ENCODE measurements at regions of chr1 and their contacts with region 1.

Region 1: GRCh38 chr1:67535474-67535873 is 105.3 kb upstream of the SERBP1 start:
- DNase-seq: peak; percentile 69
- ATAC-seq: peak; percentile 87
- H3K4me3 ChIP-seq: no peak overlapping the region
- H3K27ac ChIP-seq: no peak overlapping the region
- H3K4me1 ChIP-seq: no peaks in the 10 kb centered on the region
- H3K27me3 ChIP-seq: no peaks in the 10 kb centered on the region
- CTCF ChIP-seq: peak; percentile 88 to 99 (median 97)
- POLR2A ChIP-seq: no peak
- RAD21 ChIP-seq: peak; percentile 95

Region 2: GRCh38 chr1:67524143-67525052 is 11.1 kb before region 1 on chr1:
- CTCF ChIA-PET with region 1: interaction called, 22 read pairs
- POLR2A ChIA-PET with region 1: interaction called, 4 read pairs
- RAD21 ChIA-PET with region 1: no interaction called
- intact Hi-C with region 1: no loop called
- DNase-seq: peak; percentile 10
- ATAC-seq: peak; percentile 83
- H3K4me3 ChIP-seq: no peak overlapping the region
- H3K27ac ChIP-seq: no peak overlapping the region
- H3K4me1 ChIP-seq: peaks cover 0 to 7% of the 10 kb centered on the region in 2 experiments; a peak in 1 of 4 replicates
- H3K27me3 ChIP-seq: no peaks in the 10 kb centered on the region
- CTCF ChIP-seq: peak; percentile 36 to 57 (median 53); a peak in 5 of 6 replicates
- POLR2A ChIP-seq: no peak
- RAD21 ChIP-seq: peak; percentile 50

Region 3: DNA sequence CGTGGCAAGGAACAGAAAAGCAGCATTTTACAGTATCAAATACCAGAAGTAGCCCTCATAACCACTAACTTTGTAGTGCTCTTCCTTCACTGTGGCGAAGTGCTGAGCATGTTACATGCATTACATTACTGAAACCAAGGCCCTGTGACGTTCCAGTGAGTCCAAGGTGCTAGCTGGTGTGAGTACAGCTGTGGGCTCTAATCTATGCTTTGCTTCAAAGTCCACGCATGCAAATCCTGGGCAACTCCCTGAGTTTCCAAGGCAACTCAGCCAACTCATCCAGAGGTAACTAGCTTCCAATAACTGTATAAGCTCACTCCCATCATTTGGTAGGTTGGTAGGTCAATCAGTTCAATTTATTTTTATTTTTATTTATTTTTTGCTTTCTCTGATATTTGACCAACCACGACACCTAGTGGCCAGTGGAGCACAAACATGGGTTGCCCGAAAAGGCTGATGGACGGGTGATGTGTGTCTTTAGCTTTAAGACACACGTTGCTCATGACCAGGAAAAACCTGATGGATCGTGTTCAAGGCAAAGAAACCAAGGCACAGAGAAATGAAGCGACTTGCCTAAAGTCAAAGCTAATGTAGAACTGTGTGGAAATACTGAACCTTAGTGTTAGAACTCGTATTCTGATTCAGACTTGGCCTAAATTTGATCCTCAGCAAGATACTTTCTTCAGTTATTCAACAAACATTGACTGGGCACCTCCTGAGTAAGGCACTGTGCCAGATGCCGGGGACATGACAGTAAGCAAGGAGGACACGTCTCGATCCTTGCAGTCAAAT is 224.8 kb after region 1 on chr1:
- CTCF ChIA-PET with region 1: interaction called, 149 read pairs
- POLR2A ChIA-PET with region 1: interaction called, 9 read pairs
- RAD21 ChIA-PET with region 1: interaction called, 8 to 17 read pairs
- intact Hi-C with region 1: loop called (anchors 1 kb)
- DNase-seq: peak; percentile 54
- ATAC-seq: peak; percentile 91
- H3K4me3 ChIP-seq: no peak overlapping the region
- H3K27ac ChIP-seq: no peak overlapping the region
- H3K4me1 ChIP-seq: peaks cover 8 to 17% of the 10 kb centered on the region in 2 experiments; a peak in 3 of 4 replicates
- H3K27me3 ChIP-seq: no peaks in the 10 kb centered on the region
- CTCF ChIP-seq: peak; percentile 74 to 93 (median 79)
- POLR2A ChIP-seq: no peak
- RAD21 ChIP-seq: peak; percentile 97

Region 4: DNA sequence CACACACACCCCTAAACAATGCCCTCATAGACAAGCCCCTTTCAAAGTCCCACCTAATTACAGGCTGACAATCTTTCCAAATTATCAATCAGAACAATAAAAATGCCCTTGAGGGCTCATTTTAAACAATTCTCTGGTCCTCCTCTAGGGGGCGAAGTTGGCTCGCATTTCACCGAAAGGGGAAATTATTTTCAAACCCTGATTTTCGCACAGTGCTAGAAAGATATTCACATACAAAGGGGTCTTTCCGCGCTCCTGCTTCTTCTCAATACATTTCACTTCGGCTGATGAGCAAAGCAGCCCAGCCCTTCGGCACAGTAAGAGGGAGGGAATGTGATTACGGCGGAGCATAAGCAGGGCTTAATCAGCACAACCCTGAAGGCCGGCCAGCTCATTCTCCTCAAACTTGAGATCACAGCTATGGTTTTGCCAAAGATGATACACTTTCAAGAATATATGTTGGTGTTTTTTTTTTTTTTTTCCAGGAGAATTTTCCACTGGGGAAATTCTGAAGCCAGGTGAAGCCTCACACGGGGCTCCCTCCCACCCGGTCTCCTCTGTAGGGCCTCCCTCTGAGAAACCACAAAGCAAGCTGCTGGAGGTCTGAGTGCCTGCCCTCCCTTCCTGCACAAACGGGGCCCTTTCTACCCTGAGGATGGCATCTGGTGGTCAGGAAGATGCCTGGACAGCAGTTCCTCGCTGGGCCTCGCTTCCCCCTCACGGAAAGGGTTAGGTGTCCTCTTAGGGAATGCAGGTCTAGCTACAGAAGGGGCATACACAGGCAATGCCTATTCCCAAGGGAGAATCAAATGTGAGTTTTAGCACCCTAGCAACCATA is 230.9 kb after region 1 on chr1:
- CTCF ChIA-PET with region 1: interaction called, 149 read pairs
- POLR2A ChIA-PET with region 1: no interaction called
- RAD21 ChIA-PET with region 1: interaction called in 1 of 2 experiments, 3 read pairs
- intact Hi-C with region 1: no loop called
- DNase-seq: no peak
- ATAC-seq: peak; percentile 52; the same call in 1 of the 2 replicates
- H3K4me3 ChIP-seq: no peak overlapping the region
- H3K27ac ChIP-seq: no peak overlapping the region
- H3K4me1 ChIP-seq: no peaks in the 10 kb centered on the region
- H3K27me3 ChIP-seq: no peaks in the 10 kb centered on the region
- CTCF ChIP-seq: peak; percentile 60 to 88 (median 68)
- POLR2A ChIP-seq: no peak
- RAD21 ChIP-seq: peak; percentile 82

Region 5: GRCh38 chr1:67832737-67833601 is 297.5 kb after region 1 on chr1 and contains the start of gene GNG12:
- CTCF ChIA-PET with region 1: no interaction called
- POLR2A ChIA-PET with region 1: no interaction called
- RAD21 ChIA-PET with region 1: no interaction called
- intact Hi-C with region 1: loop called (anchors 5 kb)
- DNase-seq: peak; percentile 51
- ATAC-seq: peak; percentile 86
- H3K4me3 ChIP-seq: peak within 1 kb of the TSS; percentile 82 to 84
- H3K27ac ChIP-seq: peak within 1 kb of the TSS; percentile 79
- H3K4me1 ChIP-seq: peaks cover 12 to 28% of the 10 kb centered on the region in 2 experiments
- H3K27me3 ChIP-seq: no peaks in the 10 kb centered on the region
- CTCF ChIP-seq: no peak
- POLR2A ChIP-seq: peak; percentile 25
- RAD21 ChIP-seq: no peak
- total RNA-seq, gene GNG12: 49.6 TPM

Region 6: DNA sequence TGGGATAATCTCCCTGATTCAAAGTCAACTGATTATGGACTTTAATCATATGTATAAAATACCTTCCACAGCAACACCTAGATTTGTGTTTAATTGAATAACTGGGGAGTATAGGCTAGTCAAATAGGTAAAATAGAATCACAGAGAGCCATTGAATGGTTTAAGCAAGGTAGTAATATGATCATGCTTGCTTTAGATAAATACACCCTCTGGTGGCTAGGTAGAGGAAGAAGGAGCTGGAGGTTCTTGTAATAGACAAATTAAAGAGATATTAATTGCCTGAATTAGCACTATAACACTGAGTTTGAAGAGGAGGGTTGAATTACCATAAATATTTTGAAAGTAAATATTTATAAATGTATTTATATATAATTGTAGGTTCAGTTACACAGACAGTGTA is 474.6 kb after region 1 on chr1:
- CTCF ChIA-PET with region 1: no interaction called
- POLR2A ChIA-PET with region 1: no interaction called
- RAD21 ChIA-PET with region 1: no interaction called
- intact Hi-C with region 1: loop called (anchors 10 kb)
- DNase-seq: peak; percentile 8
- ATAC-seq: peak; percentile 71
- H3K4me3 ChIP-seq: no peak overlapping the region
- H3K27ac ChIP-seq: no peak overlapping the region
- H3K4me1 ChIP-seq: no peaks in the 10 kb centered on the region
- H3K27me3 ChIP-seq: no peaks in the 10 kb centered on the region
- CTCF ChIP-seq: peak; percentile 35 to 73 (median 48); a peak in 4 of 6 replicates
- POLR2A ChIP-seq: no peak
- RAD21 ChIP-seq: peak; percentile 85

Region 7: DNA sequence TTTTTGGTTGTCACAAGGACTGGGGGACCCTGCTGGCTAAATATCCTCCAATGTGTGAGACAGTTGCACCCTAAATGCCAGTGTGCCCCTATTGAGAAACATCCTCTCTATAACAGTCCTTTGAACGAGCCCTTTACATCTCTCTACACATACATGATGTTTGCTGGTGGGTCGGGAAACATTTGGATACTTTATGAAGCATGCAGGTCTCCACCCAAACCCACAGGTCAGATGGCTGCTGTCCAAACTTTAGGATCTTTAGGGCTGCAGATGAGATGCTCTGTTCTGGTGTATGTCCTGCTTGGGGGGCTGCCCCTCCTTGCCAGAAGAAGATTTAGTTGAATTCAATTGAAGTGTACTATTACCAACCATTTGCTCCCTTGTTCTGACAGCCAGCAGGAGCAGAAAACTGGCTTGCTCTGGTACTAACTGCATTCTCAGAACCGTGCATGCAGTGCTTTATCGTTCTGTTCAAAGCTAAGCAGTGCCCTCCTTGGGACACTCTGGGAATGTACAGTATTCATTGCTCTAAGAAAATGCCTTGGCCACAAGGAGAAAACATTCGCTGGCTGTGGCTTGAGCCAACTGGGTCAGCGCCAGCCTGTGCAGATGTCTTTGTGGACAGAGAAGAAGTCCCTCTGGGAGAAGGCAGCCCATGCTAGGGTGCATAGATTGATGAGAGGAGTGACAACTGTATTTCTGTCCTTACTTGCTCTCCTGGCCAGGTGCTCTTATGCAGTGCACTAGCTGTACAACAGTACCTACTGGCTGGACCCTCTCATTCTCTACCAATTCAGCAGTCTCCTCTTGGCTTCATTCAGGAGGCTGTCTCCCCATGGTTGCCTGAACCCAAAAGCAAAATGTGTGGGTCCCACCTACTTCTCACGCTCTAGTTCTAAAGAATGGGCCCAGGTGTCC is 576.3 kb after region 1 on chr1:
- CTCF ChIA-PET with region 1: interaction called, 6 read pairs
- POLR2A ChIA-PET with region 1: no interaction called
- RAD21 ChIA-PET with region 1: no interaction called
- intact Hi-C with region 1: loop called (anchors 5 kb)
- DNase-seq: peak; percentile 45
- ATAC-seq: peak; percentile 84
- H3K4me3 ChIP-seq: no peak overlapping the region
- H3K27ac ChIP-seq: no peak overlapping the region
- H3K4me1 ChIP-seq: peaks cover 0 to 27% of the 10 kb centered on the region in 2 experiments; a peak in 2 of 4 replicates
- H3K27me3 ChIP-seq: no peaks in the 10 kb centered on the region
- CTCF ChIP-seq: peak; percentile 54 to 84 (median 67)
- POLR2A ChIP-seq: no peak
- RAD21 ChIP-seq: peak; percentile 92

Measured in HCT116 (cell line).